Activated T-helper 2 cell treated with anti-CD3 and anti-CD28 coated beads, Interferon-gamma antibody, Interleukin-2, Interleukin-4, amounts not matched to agents 10 μg/mL and 5 μg/mL and 100 μg/mL, durations not matched to agents 14 hours and 24 hours and 36 hours (primary cell): ENCODE measurements at regions of chr19 and their contacts with region 1.

Region 1: DNA sequence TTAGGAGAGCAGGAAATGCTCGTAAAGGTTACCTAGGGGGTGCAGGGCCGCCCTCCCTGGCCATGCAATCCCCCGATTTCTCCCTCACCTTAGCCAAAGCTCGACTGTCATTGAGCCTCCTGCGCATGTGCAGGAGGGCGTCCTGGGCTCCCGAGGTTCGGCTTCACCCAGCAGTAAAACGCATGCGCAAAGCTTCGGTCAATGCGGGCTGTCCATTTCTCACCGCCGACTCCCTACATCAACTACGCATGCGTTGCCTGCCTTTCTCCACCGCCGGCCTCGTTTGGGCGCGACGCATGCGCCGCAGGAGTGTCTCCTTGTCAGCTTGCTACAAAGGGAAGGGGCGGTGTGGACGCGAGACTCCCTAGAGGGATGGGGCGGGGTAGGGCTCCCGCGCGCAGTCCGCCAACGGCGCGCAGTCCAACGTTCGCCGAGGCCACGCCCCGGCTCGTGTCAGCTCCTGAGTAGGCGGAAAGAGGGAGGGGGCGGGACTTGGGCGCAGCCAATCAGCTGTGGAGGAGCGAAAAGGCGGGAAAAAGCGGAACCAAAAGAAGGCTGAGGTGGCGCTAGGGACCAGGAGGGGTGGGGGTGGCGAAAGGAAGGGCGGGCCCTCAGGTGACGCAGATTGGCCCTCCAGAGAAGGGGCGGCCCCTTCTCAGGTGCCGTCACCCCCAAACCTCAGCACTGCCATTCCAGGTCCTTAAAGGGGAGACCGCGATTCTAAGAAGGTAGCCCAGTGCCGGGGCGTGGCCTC is at the starts of genes SYNGR4 and TMEM143:
- DNase-seq: peak; percentile 99
- H3K4me3 Mint-ChIP-seq: peak within 1 kb of the TSS; percentile 78
- H3K27ac Mint-ChIP-seq: peak within 1 kb of the TSS; percentile 90
- H3K4me1 Mint-ChIP-seq: peaks cover 12% of the 10 kb centered on the region
- H3K27me3 Mint-ChIP-seq: no peaks in the 10 kb centered on the region
- total RNA-seq, gene SYNGR4: not detected in 2 replicates
- total RNA-seq, gene TMEM143: 12.8 and 13.1 TPM in 2 replicates

Region 2: GRCh38 chr19:48333467-48334384 is 30.3 kb before region 1 on chr19:
- intact Hi-C with region 1: loop called (anchors 2 kb)
- DNase-seq: peak; percentile 92
- H3K4me3 Mint-ChIP-seq: peak overlapping the region; percentile 86
- H3K27ac Mint-ChIP-seq: peak overlapping the region; percentile 89
- H3K4me1 Mint-ChIP-seq: peaks cover 47% of the 10 kb centered on the region
- H3K27me3 Mint-ChIP-seq: no peaks in the 10 kb centered on the region

Region 3: GRCh38 chr19:48379058-48379457 is 15.1 kb after region 1 on chr19:
- intact Hi-C with region 1: no loop called
- DNase-seq: no peak
- H3K4me3 Mint-ChIP-seq: no peak overlapping the region
- H3K27ac Mint-ChIP-seq: no peak overlapping the region
- H3K4me1 Mint-ChIP-seq: no peaks in the 10 kb centered on the region
- H3K27me3 Mint-ChIP-seq: no peaks in the 10 kb centered on the region

Region 4: GRCh38 chr19:48391107-48391986 is 27.4 kb after region 1 on chr19 and contains the start of gene KDELR1:
- intact Hi-C with region 1: loop called (anchors 1 kb)
- DNase-seq: peak; percentile 69
- H3K4me3 Mint-ChIP-seq: peak within 1 kb of the TSS; percentile 99
- H3K27ac Mint-ChIP-seq: peak within 1 kb of the TSS; percentile 97
- H3K4me1 Mint-ChIP-seq: peaks cover 16% of the 10 kb centered on the region
- H3K27me3 Mint-ChIP-seq: peaks cover 35% of the 10 kb centered on the region
- total RNA-seq, gene KDELR1: 80.2 and 87.8 TPM in 2 replicates

Region 5: GRCh38 chr19:48419158-48419920 is 55.4 kb after region 1 on chr19:
- intact Hi-C with region 1: loop called (anchors 1 kb)
- DNase-seq: peak; percentile 67
- H3K4me3 Mint-ChIP-seq: peak overlapping the region; percentile 67
- H3K27ac Mint-ChIP-seq: peak overlapping the region; percentile 93
- H3K4me1 Mint-ChIP-seq: peaks cover 20% of the 10 kb centered on the region
- H3K27me3 Mint-ChIP-seq: peaks cover 10% of the 10 kb centered on the region

Region 6: GRCh38 chr19:48513289-48514122 is 149.5 kb after region 1 on chr19:
- intact Hi-C with region 1: loop called (anchors 2 kb)
- DNase-seq: peak; percentile 66
- H3K4me3 Mint-ChIP-seq: no peak overlapping the region
- H3K27ac Mint-ChIP-seq: peak overlapping the region; percentile 39
- H3K4me1 Mint-ChIP-seq: peaks cover 13% of the 10 kb centered on the region
- H3K27me3 Mint-ChIP-seq: no peaks in the 10 kb centered on the region